OCI-LY7 (cell line): ENCODE measurements at regions of chr22 and their contacts with region 1.

Region 1: DNA sequence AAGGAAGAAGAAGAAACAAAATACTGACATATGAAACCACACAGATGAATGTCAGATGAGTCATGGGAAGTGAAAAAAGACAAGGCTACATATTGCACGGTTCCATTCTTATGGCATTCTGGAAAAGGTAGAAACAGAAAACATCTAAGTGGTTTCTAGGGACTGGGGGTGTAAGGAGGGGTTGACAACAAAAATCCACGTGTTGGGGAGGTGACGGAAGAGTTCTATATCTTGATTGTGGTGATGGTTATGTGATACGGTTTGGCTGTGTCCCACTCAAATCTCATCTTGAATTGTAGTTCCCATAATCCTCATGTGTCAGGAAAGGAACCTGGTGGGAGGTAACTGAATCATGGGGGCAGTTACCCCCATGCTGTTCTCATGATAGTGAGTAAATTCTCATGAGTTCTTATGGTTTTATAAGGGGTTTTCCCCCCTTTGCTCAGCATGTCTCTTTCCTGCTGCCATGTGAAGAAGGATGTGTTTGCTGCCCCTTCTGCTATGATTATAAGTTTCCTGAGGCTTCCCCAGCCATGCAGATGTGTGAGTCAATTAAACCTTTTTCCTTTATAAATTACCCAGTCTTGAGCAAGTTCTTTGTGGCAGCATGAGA is 6.4 kb upstream of the ARFGAP3 start:
- DNase-seq: no peak
- H3K4me3 ChIP-seq: no peak overlapping the region
- H3K27ac ChIP-seq: no peak overlapping the region
- H3K4me1 ChIP-seq: peaks cover 12% of the 10 kb centered on the region
- CTCF ChIP-seq: no peak

Region 2: GRCh38 chr22:42587588-42588175 is 275.8 kb before region 1 on chr22:
- CTCF ChIA-PET with region 1: no interaction called
- POLR2A ChIA-PET with region 1: no interaction called
- intact Hi-C with region 1: no loop called
- DNase-seq: no peak
- H3K4me3 ChIP-seq: no peak overlapping the region
- H3K27ac ChIP-seq: no peak overlapping the region
- H3K4me1 ChIP-seq: peaks cover 10% of the 10 kb centered on the region
- CTCF ChIP-seq: no peak

Region 3: GRCh38 chr22:43031617-43032016 is 168.2 kb after region 1 on chr22:
- CTCF ChIA-PET with region 1: interaction called, 3 read pairs
- POLR2A ChIA-PET with region 1: interaction called, 3 read pairs
- intact Hi-C with region 1: loop called (anchors 2 kb)
- DNase-seq: no peak
- H3K4me3 ChIP-seq: no peak overlapping the region
- H3K27ac ChIP-seq: no peak overlapping the region
- H3K4me1 ChIP-seq: no peaks in the 10 kb centered on the region
- CTCF ChIP-seq: no peak

Region 4: GRCh38 chr22:43127166-43127908 is 263.9 kb after region 1 on chr22:
- CTCF ChIA-PET with region 1: interaction called, 14 read pairs
- POLR2A ChIA-PET with region 1: no interaction called
- intact Hi-C with region 1: no loop called
- DNase-seq: no peak
- H3K4me3 ChIP-seq: peak overlapping the region; percentile 50
- H3K27ac ChIP-seq: peak overlapping the region; percentile 96
- H3K4me1 ChIP-seq: peaks cover 80% of the 10 kb centered on the region
- CTCF ChIP-seq: no peak